ENCODE measurements at regions of chr21 and their contacts with region 1.

Region 1: GRCh38 chr21:15729674-15730483 is at the start of gene USP25:
- DNase-seq: peak; percentile 81 to 94 (median 89)
- ATAC-seq: peak; percentile 81
- H3K4me3 ChIP-seq: peak within 1 kb of the TSS; percentile 77
- H3K4me3 Mint-ChIP-seq: peak within 1 kb of the TSS; percentile 98
- H3K27ac ChIP-seq: peak within 1 kb of the TSS; percentile 50 to 71
- H3K27ac Mint-ChIP-seq: peak within 1 kb of the TSS; percentile 85
- H3K4me1 ChIP-seq: peaks cover 20% of the 10 kb centered on the region
- H3K4me1 Mint-ChIP-seq: peaks cover 39% of the 10 kb centered on the region
- H3K27me3 ChIP-seq: no peaks in the 10 kb centered on the region
- H3K27me3 Mint-ChIP-seq: peaks cover 4% of the 10 kb centered on the region
- CTCF ChIP-seq: no peak
- total RNA-seq, gene USP25: 45.0 to 49.2 TPM

Region 2: GRCh38 chr21:14215971-14216641 is 1513.8 kb before region 1 on chr21 and contains the start of gene RBM11:
- CTCF ChIA-PET with region 1: no interaction called
- POLR2A ChIA-PET with region 1: no interaction called
- intact Hi-C with region 1: loop called in 1 of 2 experiments (anchors 10 kb)
- DNase-seq: peak; percentile 56 to 90 (median 74)
- ATAC-seq: peak; percentile 97
- H3K4me3 ChIP-seq: peak within 1 kb of the TSS; percentile 81
- H3K4me3 Mint-ChIP-seq: peak within 1 kb of the TSS; percentile 92
- H3K27ac ChIP-seq: peak within 1 kb of the TSS in 1 of 2 donors; percentile 50
- H3K27ac Mint-ChIP-seq: peak within 1 kb of the TSS; percentile 66
- H3K4me1 ChIP-seq: peaks cover 10% of the 10 kb centered on the region
- H3K4me1 Mint-ChIP-seq: peaks cover 8% of the 10 kb centered on the region
- H3K27me3 ChIP-seq: no peaks in the 10 kb centered on the region
- H3K27me3 Mint-ChIP-seq: no peaks in the 10 kb centered on the region
- CTCF ChIP-seq: no peak
- total RNA-seq, gene RBM11: 17.4 to 18.7 TPM

Region 3: DNA sequence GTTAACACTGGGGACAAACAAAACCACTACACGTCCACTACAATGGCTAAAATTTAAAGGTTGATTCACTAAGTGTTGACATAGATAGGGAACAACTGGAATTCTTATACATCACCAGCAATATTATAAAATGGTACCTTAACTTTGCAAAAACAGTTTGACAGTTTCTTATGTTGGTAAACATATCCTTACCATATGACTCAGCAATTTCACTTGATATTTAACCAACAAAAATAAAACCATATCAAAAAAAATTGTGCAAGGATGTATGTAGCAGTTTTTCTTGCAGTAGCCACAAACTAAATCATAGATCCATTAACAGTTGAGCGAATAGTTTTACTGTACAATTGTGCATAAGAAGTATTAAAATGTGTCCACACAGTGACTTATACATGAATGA is 1341.6 kb before region 1 on chr21:
- CTCF ChIA-PET with region 1: interaction called, 3 read pairs
- POLR2A ChIA-PET with region 1: interaction called, 6 read pairs
- intact Hi-C with region 1: loop called (anchors 5 kb)
- DNase-seq: no peak
- ATAC-seq: no peak
- H3K4me3 ChIP-seq: no peak overlapping the region
- H3K4me3 Mint-ChIP-seq: no peak overlapping the region
- H3K27ac ChIP-seq: no peak overlapping the region
- H3K27ac Mint-ChIP-seq: no peak overlapping the region
- H3K4me1 ChIP-seq: peaks cover 7% of the 10 kb centered on the region
- H3K4me1 Mint-ChIP-seq: peaks cover 7% of the 10 kb centered on the region
- H3K27me3 ChIP-seq: no peaks in the 10 kb centered on the region
- H3K27me3 Mint-ChIP-seq: peaks cover 10% of the 10 kb centered on the region
- CTCF ChIP-seq: no peak

Region 4: DNA sequence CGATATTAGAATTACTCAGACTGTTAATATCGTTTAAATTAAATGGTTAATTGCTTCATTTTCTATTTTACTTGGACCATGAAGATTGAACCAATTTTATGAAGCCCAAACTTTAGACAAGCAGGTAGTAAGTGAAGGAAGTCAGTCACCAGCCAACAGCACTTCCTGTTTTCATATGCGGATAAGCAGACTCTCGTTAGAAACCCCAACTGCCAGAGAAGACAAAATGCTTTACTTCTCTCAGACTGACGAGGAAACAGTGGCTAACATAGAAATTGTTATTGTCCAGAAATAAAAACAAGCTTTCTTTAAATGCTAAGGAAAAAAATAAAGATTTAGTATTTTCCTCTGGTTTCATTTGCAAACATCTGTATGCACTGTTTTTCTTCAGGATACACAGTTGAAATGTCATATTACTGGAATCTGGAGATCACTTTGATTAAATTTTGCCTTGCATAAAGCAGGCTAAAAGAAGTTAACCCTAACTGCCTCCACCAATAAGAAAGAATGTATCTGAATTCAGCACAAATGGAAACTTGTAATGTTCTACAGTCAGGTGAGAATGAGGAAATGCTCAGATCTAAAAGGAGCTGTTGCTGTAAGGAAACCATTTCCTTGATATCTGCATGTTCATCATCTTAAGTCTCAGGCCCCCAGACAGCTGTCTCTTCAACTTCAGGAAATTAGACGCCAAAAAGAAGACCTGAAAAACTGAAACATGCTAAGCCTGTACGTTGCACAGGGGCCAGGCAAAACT is 1053.9 kb before region 1 on chr21:
- CTCF ChIA-PET with region 1: no interaction called
- POLR2A ChIA-PET with region 1: interaction called, 5 read pairs
- intact Hi-C with region 1: loop called in 1 of 2 experiments (anchors 10 kb)
- DNase-seq: peak in 12 of 14 experiments; percentile 0 to 78 (median 16)
- ATAC-seq: peak; percentile 88
- H3K4me3 ChIP-seq: peak overlapping the region; percentile 4
- H3K4me3 Mint-ChIP-seq: peak overlapping the region; percentile 42
- H3K27ac ChIP-seq: peak overlapping the region; percentile 60 to 77
- H3K27ac Mint-ChIP-seq: peak overlapping the region; percentile 97
- H3K4me1 ChIP-seq: peaks cover 22% of the 10 kb centered on the region
- H3K4me1 Mint-ChIP-seq: peaks cover 50% of the 10 kb centered on the region
- H3K27me3 ChIP-seq: no peaks in the 10 kb centered on the region
- H3K27me3 Mint-ChIP-seq: no peaks in the 10 kb centered on the region
- CTCF ChIP-seq: no peak

Region 5: DNA sequence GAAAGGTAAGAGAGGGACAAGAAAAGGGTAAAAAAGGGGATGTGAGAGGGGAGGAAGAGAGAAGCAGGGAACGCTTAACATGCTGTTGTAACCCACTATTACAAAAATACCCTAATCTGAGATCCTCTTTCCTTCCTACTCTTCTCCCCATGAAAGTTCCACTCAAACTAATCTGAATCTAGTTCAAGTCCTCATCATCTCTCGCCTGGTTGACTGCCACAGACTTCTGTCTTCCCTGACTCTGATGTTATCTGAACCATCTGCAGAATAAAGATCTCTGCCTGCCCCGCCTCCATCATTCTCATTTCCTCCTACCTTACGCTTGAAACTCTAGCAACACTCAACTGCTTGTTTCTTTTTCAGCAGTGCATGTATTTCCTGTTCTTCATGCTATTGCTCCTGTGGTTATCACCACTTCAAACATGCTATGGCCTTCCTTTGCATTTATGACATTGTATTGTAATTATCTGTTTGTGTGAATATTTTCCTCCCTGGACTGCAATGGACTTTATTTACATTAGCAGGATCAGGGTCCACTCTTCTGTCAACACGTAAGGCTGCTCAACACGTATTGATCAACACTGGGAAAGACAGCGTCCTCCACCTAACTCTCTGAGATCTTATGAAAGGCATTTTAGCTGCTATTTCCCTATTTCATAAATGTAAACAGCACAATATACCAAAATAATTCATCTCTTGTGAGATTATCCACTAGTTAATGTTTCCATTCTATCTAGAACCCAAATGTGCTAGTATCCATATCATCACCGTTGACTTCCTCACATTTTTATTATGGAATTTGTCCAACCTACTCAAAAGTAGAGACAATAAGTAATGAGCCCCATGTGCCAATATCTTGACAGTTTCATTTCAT is 215.6 kb before region 1 on chr21:
- CTCF ChIA-PET with region 1: no interaction called
- POLR2A ChIA-PET with region 1: no interaction called
- intact Hi-C with region 1: loop called (anchors 5 to 10 kb)
- DNase-seq: peak; percentile 36 to 90 (median 53)
- ATAC-seq: peak; percentile 99
- H3K4me3 ChIP-seq: peak overlapping the region; percentile 12
- H3K4me3 Mint-ChIP-seq: peak overlapping the region; percentile 26
- H3K27ac ChIP-seq: peak overlapping the region; percentile 0 to 53
- H3K27ac Mint-ChIP-seq: peak overlapping the region; percentile 82
- H3K4me1 ChIP-seq: peaks cover 6% of the 10 kb centered on the region
- H3K4me1 Mint-ChIP-seq: peaks cover 38% of the 10 kb centered on the region
- H3K27me3 ChIP-seq: no peaks in the 10 kb centered on the region
- H3K27me3 Mint-ChIP-seq: no peaks in the 10 kb centered on the region
- CTCF ChIP-seq: no peak

Region 6: DNA sequence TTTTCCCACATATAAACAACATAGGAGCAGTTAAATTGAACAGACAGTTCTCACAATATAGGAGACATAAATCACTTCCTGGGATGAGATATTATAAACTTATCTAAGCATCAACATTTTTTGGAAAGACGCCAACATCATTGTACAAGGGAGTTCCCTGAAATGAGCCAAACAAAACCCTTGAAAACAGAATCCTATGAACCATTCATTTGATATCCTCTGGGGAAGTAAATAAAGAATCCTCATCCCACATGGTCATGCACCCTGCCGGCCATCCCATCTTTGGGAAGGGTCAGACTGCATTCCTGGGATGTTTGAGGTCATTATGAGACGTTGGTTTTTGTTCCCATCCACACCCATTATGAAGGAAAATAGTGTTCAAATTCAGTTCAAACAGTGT is 111.9 kb before region 1 on chr21:
- CTCF ChIA-PET with region 1: no interaction called
- POLR2A ChIA-PET with region 1: no interaction called
- intact Hi-C with region 1: no loop called
- DNase-seq: no peak
- ATAC-seq: no peak
- H3K4me3 ChIP-seq: no peak overlapping the region
- H3K4me3 Mint-ChIP-seq: no peak overlapping the region
- H3K27ac ChIP-seq: no peak overlapping the region
- H3K27ac Mint-ChIP-seq: no peak overlapping the region
- H3K4me1 ChIP-seq: no peaks in the 10 kb centered on the region
- H3K4me1 Mint-ChIP-seq: no peaks in the 10 kb centered on the region
- H3K27me3 ChIP-seq: no peaks in the 10 kb centered on the region
- H3K27me3 Mint-ChIP-seq: no peaks in the 10 kb centered on the region
- CTCF ChIP-seq: no peak

Region 7: GRCh38 chr21:15788847-15789493 is 59.1 kb after region 1 on chr21:
- CTCF ChIA-PET with region 1: no interaction called
- POLR2A ChIA-PET with region 1: no interaction called
- intact Hi-C with region 1: loop called in 1 of 2 experiments (anchors 5 kb)
- DNase-seq: no peak
- ATAC-seq: no peak
- H3K4me3 ChIP-seq: no peak overlapping the region
- H3K4me3 Mint-ChIP-seq: no peak overlapping the region
- H3K27ac ChIP-seq: no peak overlapping the region
- H3K27ac Mint-ChIP-seq: peak overlapping the region; percentile 25
- H3K4me1 ChIP-seq: peaks cover 4% of the 10 kb centered on the region
- H3K4me1 Mint-ChIP-seq: peaks cover 63% of the 10 kb centered on the region
- H3K27me3 ChIP-seq: no peaks in the 10 kb centered on the region
- H3K27me3 Mint-ChIP-seq: no peaks in the 10 kb centered on the region
- CTCF ChIP-seq: no peak

Region 8: GRCh38 chr21:17611414-17612022 is 1881.6 kb after region 1 on chr21:
- CTCF ChIA-PET with region 1: no interaction called
- POLR2A ChIA-PET with region 1: interaction called, 4 read pairs
- intact Hi-C with region 1: loop called in 1 of 2 experiments (anchors 10 kb)
- DNase-seq: peak; percentile 54 to 92 (median 72)
- ATAC-seq: peak; percentile 69
- H3K4me3 ChIP-seq: peak overlapping the region; percentile 91
- H3K4me3 Mint-ChIP-seq: peak overlapping the region; percentile 93
- H3K27ac ChIP-seq: peak overlapping the region; percentile 58 to 60
- H3K27ac Mint-ChIP-seq: peak overlapping the region; percentile 89
- H3K4me1 ChIP-seq: peaks cover 17% of the 10 kb centered on the region
- H3K4me1 Mint-ChIP-seq: peaks cover 40% of the 10 kb centered on the region
- H3K27me3 ChIP-seq: no peaks in the 10 kb centered on the region
- H3K27me3 Mint-ChIP-seq: no peaks in the 10 kb centered on the region
- CTCF ChIP-seq: no peak

Measured in CD4-positive, alpha-beta T cell (primary cell).